ENCODE measurements at regions of chr3 and their contacts with region 1.

Region 1: GRCh38 chr3:12782172-12782815 is 14.2 kb upstream of the CAND2 start:
- DNase-seq: peak; percentile 75
- ATAC-seq: peak; percentile 74
- H3K4me3 ChIP-seq: no peak overlapping the region
- H3K27ac ChIP-seq: peak overlapping the region; percentile 77; the same call in 1 of the 2 replicates
- H3K4me1 ChIP-seq: peaks cover 5% of the 10 kb centered on the region; the same call in 1 of the 2 replicates
- H3K27me3 ChIP-seq: peaks cover 4% of the 10 kb centered on the region; the same call in 1 of the 2 replicates
- CTCF ChIP-seq: no peak
- POLR2A ChIP-seq: no peak
- RAD21 ChIP-seq: no peak

Region 2: GRCh38 chr3:12287727-12288191 is 494.5 kb before region 1 on chr3:
- CTCF ChIA-PET with region 1: no interaction called
- POLR2A ChIA-PET with region 1: no interaction called
- dilution Hi-C with region 1: no loop called
- in situ Hi-C with region 1: no loop called
- intact Hi-C with region 1: no loop called
- DNase-seq: no peak
- ATAC-seq: peak; percentile 87
- H3K4me3 ChIP-seq: peak overlapping the region; percentile 95
- H3K27ac ChIP-seq: peak overlapping the region; percentile 50
- H3K4me1 ChIP-seq: peaks cover 2% of the 10 kb centered on the region
- H3K27me3 ChIP-seq: no peaks in the 10 kb centered on the region
- CTCF ChIP-seq: no peak
- POLR2A ChIP-seq: no peak
- RAD21 ChIP-seq: peak; percentile 38

Region 3: DNA sequence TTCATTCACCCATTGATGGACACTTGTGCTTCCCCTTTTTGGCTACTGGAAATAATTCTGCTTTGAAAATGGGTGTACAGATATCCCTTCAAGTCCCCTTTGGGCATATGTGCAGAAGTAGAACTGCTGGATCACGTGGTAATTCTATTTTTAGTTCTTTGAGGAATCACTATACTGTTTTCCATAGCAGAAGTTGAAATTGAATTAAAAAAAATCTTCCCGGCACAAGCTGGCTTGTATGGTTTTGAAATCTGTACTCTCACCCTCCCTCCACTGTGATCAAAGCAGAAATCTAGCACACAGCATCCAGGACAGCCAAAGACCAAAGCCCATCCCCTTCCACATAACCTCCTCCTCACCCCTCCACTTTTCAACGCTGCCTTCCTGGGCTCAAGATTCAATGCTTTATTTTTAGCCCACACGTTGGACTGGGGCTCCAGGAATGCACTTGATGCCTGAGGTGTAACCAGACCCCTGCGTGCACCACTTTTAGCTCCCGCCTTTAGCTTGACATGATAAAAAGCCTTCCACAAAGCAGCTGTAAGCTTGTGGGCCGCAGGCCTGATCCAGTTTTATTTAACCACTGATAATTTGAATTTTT is 53.1 kb before region 1 on chr3:
- CTCF ChIA-PET with region 1: no interaction called
- POLR2A ChIA-PET with region 1: interaction called, 21 read pairs
- dilution Hi-C with region 1: no loop called
- in situ Hi-C with region 1: no loop called
- intact Hi-C with region 1: no loop called
- DNase-seq: peak; percentile 60
- ATAC-seq: peak; percentile 27; the same call in 1 of the 2 replicates
- H3K4me3 ChIP-seq: no peak overlapping the region
- H3K27ac ChIP-seq: no peak overlapping the region
- H3K4me1 ChIP-seq: peaks cover 3% of the 10 kb centered on the region; the same call in 1 of the 2 replicates
- H3K27me3 ChIP-seq: peaks cover 2% of the 10 kb centered on the region
- CTCF ChIP-seq: no peak
- POLR2A ChIP-seq: no peak
- RAD21 ChIP-seq: no peak

Region 4: DNA sequence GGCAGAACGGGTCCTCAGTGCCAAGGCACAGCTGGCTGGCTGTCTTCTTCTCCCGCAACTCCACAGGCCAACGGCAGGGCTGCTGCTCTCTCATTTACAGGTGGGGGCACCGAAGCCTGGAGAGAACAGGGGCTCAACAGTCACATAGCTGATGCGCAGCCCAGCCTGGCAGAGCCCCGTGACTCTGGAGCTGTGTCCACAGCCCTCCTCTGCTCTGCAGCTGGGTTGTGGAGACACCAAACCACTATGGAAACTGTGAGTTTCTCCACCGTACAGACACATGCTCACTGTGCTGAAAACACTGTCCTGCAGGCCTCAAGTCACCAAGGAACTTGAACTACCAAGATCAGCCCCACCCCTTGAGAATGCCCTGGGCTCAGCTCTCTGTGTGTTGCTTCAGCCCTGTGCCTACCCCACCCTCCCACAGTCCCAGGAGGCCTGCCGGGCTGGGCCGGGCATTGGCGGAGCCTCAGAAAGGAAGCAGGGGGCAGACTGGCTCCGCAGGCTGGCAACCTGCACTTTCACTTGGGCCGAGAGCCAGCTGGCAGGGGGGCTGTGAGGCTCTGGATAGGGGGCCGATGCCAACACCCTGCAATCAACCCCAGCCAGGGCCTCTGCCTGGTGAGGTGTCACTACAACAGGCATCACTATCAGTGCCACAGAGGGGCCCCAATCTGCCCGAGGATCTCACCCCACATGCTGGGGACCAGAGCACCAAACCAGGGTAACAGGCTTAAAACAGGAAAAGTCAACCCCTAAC is 172.8 kb after region 1 on chr3:
- CTCF ChIA-PET with region 1: no interaction called
- POLR2A ChIA-PET with region 1: no interaction called
- dilution Hi-C with region 1: no loop called
- in situ Hi-C with region 1: no loop called
- intact Hi-C with region 1: no loop called
- DNase-seq: no peak
- ATAC-seq: peak; percentile 61
- H3K4me3 ChIP-seq: no peak overlapping the region
- H3K27ac ChIP-seq: no peak overlapping the region
- H3K4me1 ChIP-seq: peaks cover 9% of the 10 kb centered on the region; the same call in 1 of the 2 replicates
- H3K27me3 ChIP-seq: no peaks in the 10 kb centered on the region
- CTCF ChIP-seq: no peak
- POLR2A ChIP-seq: no peak
- RAD21 ChIP-seq: no peak

Region 5: DNA sequence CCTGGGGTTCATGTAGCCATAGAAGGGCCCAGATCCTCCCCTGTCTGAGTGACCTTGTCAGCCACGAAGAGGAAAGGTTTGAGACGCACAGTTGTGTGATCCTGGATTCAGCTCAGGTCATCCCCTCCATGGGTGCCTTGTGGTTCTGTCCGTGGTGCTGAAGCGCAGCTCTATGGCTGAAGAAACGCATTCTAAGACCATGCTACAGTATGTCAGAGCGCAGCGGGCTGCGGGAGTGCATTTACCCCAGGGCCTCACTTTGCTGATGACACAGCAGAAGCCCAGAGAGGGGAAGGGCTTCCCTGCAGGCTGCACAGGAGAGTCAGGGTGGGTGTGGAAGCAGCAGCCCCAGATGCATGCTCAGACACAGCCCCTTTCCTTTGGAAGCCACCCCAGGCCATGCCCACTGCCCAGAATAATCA is 359.7 kb after region 1 on chr3:
- CTCF ChIA-PET with region 1: no interaction called
- POLR2A ChIA-PET with region 1: no interaction called
- dilution Hi-C with region 1: no loop called
- in situ Hi-C with region 1: no loop called
- intact Hi-C with region 1: no loop called
- DNase-seq: peak; percentile 28
- ATAC-seq: peak; percentile 81
- H3K4me3 ChIP-seq: no peak overlapping the region
- H3K27ac ChIP-seq: no peak overlapping the region
- H3K4me1 ChIP-seq: no peaks in the 10 kb centered on the region
- H3K27me3 ChIP-seq: no peaks in the 10 kb centered on the region; the same call in 1 of the 2 replicates
- CTCF ChIP-seq: no peak
- POLR2A ChIP-seq: no peak
- RAD21 ChIP-seq: no peak